ENCODE measurements at regions of chr1 and their contacts with region 1.

Region 1: GRCh38 chr1:154019940-154020339 is 29.4 kb downstream of the RPS27 start:
- DNase-seq: no peak
- H3K4me3 ChIP-seq: no peak overlapping the region
- H3K27ac ChIP-seq: no peak overlapping the region
- H3K4me1 ChIP-seq: no peaks in the 10 kb centered on the region
- H3K27me3 ChIP-seq: no peaks in the 10 kb centered on the region
- CTCF ChIP-seq: no peak
- POLR2A ChIP-seq: no peak

Region 2: GRCh38 chr1:154115180-154115579 is 95.2 kb after region 1 on chr1:
- CTCF ChIA-PET with region 1: no interaction called
- POLR2A ChIA-PET with region 1: no interaction called
- dilution Hi-C with region 1: no loop called
- intact Hi-C with region 1: loop called (anchors 10 kb)
- DNase-seq: no peak
- H3K4me3 ChIP-seq: no peak overlapping the region
- H3K27ac ChIP-seq: no peak overlapping the region
- H3K4me1 ChIP-seq: no peaks in the 10 kb centered on the region
- H3K27me3 ChIP-seq: no peaks in the 10 kb centered on the region
- CTCF ChIP-seq: no peak
- POLR2A ChIP-seq: no peak

Region 3: DNA sequence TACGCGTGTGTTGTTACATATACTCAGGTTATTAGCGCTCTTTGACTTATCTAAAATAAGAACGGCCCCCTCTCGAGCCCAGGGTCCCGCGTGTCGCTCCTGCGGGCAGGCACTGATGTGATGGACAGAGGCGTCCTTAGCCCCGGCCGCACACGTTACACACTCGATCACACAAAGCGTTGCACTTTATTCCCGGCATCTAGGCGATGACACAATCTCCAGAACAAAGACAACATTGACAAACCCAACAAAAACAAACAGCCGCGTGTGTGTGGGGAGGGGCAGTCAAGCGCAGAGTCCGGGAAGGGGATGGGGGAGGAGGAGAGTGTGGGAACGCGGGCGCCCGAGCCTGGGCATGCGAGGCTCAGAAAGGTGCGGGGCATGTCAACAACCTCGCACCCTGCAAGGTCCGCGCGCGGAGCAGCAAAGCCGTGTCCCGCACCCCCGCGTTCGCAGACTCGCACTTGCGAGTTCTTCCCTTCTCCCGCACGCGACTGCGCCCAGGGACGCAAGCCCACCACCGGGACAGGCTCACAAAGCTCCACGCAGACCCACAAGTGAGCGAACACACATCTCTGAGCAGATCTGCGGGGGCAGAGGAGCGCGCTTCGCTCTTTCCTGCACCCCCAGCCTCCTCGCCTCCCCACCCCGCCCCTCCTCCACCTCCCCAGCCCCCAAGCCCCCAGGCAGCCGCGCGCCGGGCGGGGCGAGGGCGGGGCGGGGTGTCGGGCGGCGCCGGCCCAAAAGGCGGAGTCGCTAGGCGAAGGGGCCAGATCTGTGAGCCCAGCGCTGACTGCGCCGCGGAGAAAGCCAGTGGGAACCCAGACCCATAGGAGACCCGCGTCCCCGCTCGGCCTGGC is 1107.4 kb after region 1 on chr1 and contains the start of gene EFNA1:
- CTCF ChIA-PET with region 1: no interaction called
- POLR2A ChIA-PET with region 1: no interaction called
- dilution Hi-C with region 1: no loop called
- intact Hi-C with region 1: no loop called
- DNase-seq: peak; percentile 93
- H3K4me3 ChIP-seq: peak within 1 kb of the TSS; percentile 51 to 95 (median 91)
- H3K27ac ChIP-seq: peak within 1 kb of the TSS; percentile 68
- H3K4me1 ChIP-seq: peaks cover 59% of the 10 kb centered on the region
- H3K27me3 ChIP-seq: no peaks in the 10 kb centered on the region
- CTCF ChIP-seq: no peak
- POLR2A ChIP-seq: peak; percentile 95
- total RNA-seq, gene EFNA1: 107 and 111 TPM in 2 replicates

Measured in endothelial cell of umbilical vein (primary cell).